ENCODE measurements at regions of chr5 and their contacts with region 1.

Region 1: DNA sequence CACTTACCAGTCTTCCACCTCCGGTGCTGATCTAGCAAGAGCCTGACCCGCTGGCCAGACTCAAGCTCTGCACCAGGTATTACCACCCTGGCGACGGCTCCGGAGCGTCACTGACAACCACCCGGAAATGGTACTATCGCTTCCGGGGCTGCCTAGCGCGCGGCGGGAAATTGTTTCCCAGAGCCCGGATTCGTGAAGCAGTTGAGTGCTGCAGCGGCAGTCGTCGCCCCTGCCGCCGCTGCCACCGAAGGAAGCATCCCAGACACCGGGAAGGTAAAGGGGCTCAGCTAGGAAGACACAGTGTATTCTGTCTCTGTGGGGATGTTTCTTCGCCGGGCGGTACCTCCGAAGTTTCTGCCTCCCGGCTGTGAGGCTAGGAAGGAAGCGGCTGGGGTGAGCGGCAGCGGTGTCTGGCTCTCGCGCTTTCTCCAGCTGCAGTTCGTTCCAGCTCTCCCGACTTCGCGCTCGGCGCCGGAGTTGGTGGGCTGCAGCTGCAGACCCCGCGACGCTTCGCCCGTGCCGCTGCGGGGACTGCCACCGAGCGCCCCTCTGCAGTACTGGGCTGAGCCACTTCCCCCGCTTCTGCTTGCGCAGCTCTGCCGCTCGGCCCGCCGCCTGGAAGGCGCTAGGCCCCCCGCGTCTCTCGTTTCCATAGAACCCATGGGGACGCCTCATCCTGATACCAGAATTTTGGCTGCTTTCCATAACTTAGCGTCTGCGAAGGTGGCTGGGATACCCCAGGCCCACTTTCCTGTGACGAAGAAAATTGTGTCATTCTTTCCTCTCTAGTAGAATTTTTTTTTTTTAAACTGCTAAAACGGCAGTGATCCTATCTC is at the starts of genes KIAA0825 and SLF1:
- DNase-seq: peak; percentile 85 to 92 (median 90)
- ATAC-seq: peak; percentile 97 to 99 (median 99)
- H3K4me3 ChIP-seq: peak within 1 kb of the TSS; percentile 61 to 91 (median 72)
- H3K27ac ChIP-seq: peak within 1 kb of the TSS; percentile 5 to 86 (median 71)
- H3K4me1 ChIP-seq: peaks cover 0 to 28% (median 16%) of the 10 kb centered on the region in 12 donors
- H3K27me3 ChIP-seq: no peaks in the 10 kb centered on the region
- CTCF ChIP-seq: no peak
- POLR2A ChIP-seq: peak in 1 of 2 donors; percentile 23
- total RNA-seq, gene KIAA0825: 1.6 to 4.1 (median 2.4) TPM
- total RNA-seq, gene SLF1: 4.0 to 8.1 (median 5.8) TPM

Region 2: DNA sequence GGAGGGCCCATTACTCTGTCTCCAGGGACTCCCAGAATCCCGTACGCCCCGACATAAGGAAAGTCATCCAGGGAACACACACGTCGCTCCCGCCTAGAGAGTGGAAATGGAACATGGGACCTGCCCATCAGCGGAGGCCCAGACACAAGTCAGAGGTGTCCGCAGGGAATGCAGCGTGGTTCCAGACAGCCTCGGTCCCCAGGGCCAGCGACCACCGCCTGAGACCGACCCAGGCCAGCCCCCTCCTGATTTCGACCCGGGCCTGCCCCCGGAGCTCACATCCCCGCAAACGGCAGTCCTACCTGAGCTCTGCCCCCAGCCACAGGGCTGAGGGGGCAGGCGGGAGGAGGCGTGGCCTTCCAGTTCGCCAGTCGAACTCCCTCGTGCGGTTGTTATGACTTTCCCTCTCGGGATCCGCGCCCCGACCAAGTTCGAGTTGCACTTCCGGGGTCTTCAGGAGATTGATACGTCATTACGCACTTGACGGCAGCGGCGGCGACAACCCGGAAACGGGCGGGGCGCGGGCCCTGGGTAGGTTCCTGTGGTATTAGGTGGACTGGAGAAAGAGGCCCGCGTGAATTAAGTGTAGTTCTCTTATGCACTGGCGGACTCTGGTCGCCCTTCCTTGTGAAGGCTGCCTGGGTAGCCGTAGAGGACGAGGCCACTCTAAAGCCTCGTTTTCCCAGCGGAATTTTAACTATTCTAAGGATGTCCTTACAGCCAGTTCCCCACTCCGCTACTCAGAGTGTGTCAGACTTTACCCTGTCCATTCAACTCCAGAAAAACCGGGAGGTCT is 507.3 kb before region 1 on chr5:
- intact Hi-C with region 1: loop called in 1 of 10 experiments (anchors 10 kb)
- DNase-seq: peak; percentile 92 to 96 (median 95)
- ATAC-seq: peak; percentile 95 to 100 (median 100)
- H3K4me3 ChIP-seq: peak overlapping the region; percentile 60 to 96 (median 80)
- H3K27ac ChIP-seq: peak overlapping the region; percentile 39 to 96 (median 90)
- H3K4me1 ChIP-seq: peaks cover 0 to 17% (median 6%) of the 10 kb centered on the region in 12 donors
- H3K27me3 ChIP-seq: no peaks in the 10 kb centered on the region
- CTCF ChIP-seq: peak in 5 of 12 donors; percentile 8 to 48 (median 27)
- POLR2A ChIP-seq: peak in 1 of 2 donors; percentile 70

Region 3: DNA sequence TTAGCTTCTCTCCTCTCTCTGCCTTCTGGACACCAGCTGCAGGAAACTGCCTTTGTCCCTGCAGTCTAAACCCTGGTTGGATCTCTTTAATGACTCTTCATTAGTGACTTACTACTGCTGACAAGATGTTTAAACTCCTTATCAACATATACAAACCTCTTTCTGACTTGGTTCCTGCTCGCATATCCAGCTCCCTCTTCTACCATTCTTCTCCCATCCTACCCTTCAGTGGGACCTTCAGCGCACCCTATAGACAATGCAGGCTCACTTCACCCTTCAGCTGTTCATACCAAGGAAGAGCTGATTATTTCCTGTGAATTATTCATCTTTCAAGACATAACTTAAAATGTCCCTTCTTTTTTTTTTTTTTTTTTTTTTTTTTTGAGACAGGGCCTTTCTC is 436.8 kb before region 1 on chr5:
- intact Hi-C with region 1: no loop called
- DNase-seq: no peak
- ATAC-seq: no peak
- H3K4me3 ChIP-seq: no peak overlapping the region
- H3K27ac ChIP-seq: no peak overlapping the region
- H3K4me1 ChIP-seq: no peaks in the 10 kb centered on the region
- H3K27me3 ChIP-seq: no peaks in the 10 kb centered on the region
- CTCF ChIP-seq: no peak
- POLR2A ChIP-seq: no peak

Region 4: GRCh38 chr5:94314460-94315132 is 304.1 kb before region 1 on chr5:
- intact Hi-C with region 1: no loop called
- DNase-seq: no peak
- ATAC-seq: no peak
- H3K4me3 ChIP-seq: no peak overlapping the region
- H3K27ac ChIP-seq: no peak overlapping the region
- H3K4me1 ChIP-seq: peaks cover 0 to 7% (median 0%) of the 10 kb centered on the region in 12 donors
- H3K27me3 ChIP-seq: no peaks in the 10 kb centered on the region
- CTCF ChIP-seq: no peak
- POLR2A ChIP-seq: no peak

Region 5: GRCh38 chr5:94562327-94562971 is 56.3 kb before region 1 on chr5:
- intact Hi-C with region 1: no loop called
- DNase-seq: no peak
- ATAC-seq: no peak
- H3K4me3 ChIP-seq: no peak overlapping the region
- H3K27ac ChIP-seq: no peak overlapping the region
- H3K4me1 ChIP-seq: no peaks in the 10 kb centered on the region
- H3K27me3 ChIP-seq: no peaks in the 10 kb centered on the region
- CTCF ChIP-seq: no peak
- POLR2A ChIP-seq: no peak

Region 6: DNA sequence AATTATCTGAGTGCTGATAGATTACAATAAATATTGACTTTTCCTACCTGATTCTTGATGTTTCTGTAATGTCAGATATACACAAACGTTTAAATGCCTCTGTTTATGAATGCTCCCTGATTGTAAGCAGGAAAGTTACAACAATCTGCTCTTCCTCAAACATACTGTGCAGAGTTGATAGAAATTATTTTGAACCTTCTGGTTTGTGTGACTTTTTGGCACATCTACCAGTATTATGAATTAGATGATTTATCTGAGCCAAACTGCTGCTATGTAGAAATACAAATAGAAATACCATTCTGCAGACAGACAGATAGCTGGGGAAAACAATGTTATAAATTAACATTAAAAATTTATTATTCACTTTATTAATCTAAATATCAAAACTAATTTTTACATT is 112.8 kb after region 1 on chr5:
- intact Hi-C with region 1: loop called in 1 of 10 experiments (anchors 10 kb)
- DNase-seq: no peak
- ATAC-seq: no peak
- H3K4me3 ChIP-seq: no peak overlapping the region
- H3K27ac ChIP-seq: no peak overlapping the region
- H3K4me1 ChIP-seq: no peaks in the 10 kb centered on the region
- H3K27me3 ChIP-seq: no peaks in the 10 kb centered on the region
- CTCF ChIP-seq: no peak
- POLR2A ChIP-seq: no peak